Heart right ventricle (tissue), 16 donors: ENCODE measurements at regions of chr10 and their contacts with region 1.

Region 1: GRCh38 chr10:116272440-116273283 is at the start of gene GFRA1:
- DNase-seq: peak in 1 of 2 donors; percentile 32
- ATAC-seq: peak in 6 of 8 donors; percentile 17 to 39 (median 30)
- H3K4me3 ChIP-seq: peak within 1 kb of the TSS; percentile 32 to 60 (median 50)
- H3K27ac ChIP-seq: peak within 1 kb of the TSS in 2 of 10 donors; percentile 4 to 55
- H3K4me1 ChIP-seq: peaks cover 0 to 41% (median 18%) of the 10 kb centered on the region in 9 donors
- H3K27me3 ChIP-seq: peaks cover 0 to 89% (median 75%) of the 10 kb centered on the region in 7 donors
- CTCF ChIP-seq: no peak
- total RNA-seq, gene GFRA1: 0.38 to 9.3 (median 2.1) TPM

Region 2: DNA sequence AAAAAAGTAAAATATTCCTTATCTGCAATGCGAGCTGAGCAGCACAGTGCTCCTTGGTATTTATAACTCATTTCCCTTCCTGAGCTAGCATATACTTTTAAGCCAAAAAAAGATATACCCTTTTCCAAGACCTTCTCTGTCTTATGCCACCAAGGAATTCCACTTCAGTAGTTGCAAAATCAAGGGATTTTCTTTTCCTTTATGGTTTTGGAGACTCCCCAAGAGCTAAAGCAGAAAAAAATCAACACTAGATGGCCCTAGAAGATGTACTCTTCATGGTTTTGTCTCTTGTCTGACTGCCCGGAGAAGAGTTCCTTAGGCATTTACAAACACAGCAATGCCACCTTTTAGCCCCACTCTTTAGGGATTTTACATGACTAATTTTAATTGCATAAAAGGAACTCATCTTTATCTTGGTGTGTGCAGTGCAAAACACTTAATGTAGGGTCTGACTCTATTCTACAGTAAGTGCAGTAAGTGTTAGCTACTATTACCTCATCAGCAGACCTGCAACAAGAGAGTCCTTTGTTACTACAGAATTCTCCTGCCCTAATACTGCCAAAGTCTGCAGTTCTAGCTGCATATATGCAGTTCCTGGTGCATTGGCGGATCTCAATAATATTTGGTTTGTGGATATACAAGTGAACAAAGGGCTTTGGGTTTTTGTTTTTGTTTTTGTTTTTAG is 443.0 kb before region 1 on chr10:
- intact Hi-C with region 1: loop called in 1 of 10 experiments (anchors 5 kb)
- DNase-seq: no peak
- ATAC-seq: peak in 4 of 8 donors; percentile 20 to 70 (median 40)
- H3K4me3 ChIP-seq: no peak overlapping the region
- H3K27ac ChIP-seq: no peak overlapping the region
- H3K4me1 ChIP-seq: peaks cover 0 to 15% (median 0%) of the 10 kb centered on the region in 9 donors
- H3K27me3 ChIP-seq: no peaks in the 10 kb centered on the region
- CTCF ChIP-seq: peak in 7 of 9 donors; percentile 21 to 47 (median 34)

Region 3: GRCh38 chr10:115948465-115948864 is 324.2 kb before region 1 on chr10:
- intact Hi-C with region 1: loop called in 2 of 10 experiments (anchors 10 kb)
- DNase-seq: no peak
- ATAC-seq: peak in 2 of 8 donors; percentile 38
- H3K4me3 ChIP-seq: no peak overlapping the region
- H3K27ac ChIP-seq: no peak overlapping the region
- H3K4me1 ChIP-seq: peaks cover 0 to 9% (median 0%) of the 10 kb centered on the region in 9 donors
- H3K27me3 ChIP-seq: no peaks in the 10 kb centered on the region
- CTCF ChIP-seq: peak in 8 of 9 donors; percentile 12 to 57 (median 39)

Region 4: DNA sequence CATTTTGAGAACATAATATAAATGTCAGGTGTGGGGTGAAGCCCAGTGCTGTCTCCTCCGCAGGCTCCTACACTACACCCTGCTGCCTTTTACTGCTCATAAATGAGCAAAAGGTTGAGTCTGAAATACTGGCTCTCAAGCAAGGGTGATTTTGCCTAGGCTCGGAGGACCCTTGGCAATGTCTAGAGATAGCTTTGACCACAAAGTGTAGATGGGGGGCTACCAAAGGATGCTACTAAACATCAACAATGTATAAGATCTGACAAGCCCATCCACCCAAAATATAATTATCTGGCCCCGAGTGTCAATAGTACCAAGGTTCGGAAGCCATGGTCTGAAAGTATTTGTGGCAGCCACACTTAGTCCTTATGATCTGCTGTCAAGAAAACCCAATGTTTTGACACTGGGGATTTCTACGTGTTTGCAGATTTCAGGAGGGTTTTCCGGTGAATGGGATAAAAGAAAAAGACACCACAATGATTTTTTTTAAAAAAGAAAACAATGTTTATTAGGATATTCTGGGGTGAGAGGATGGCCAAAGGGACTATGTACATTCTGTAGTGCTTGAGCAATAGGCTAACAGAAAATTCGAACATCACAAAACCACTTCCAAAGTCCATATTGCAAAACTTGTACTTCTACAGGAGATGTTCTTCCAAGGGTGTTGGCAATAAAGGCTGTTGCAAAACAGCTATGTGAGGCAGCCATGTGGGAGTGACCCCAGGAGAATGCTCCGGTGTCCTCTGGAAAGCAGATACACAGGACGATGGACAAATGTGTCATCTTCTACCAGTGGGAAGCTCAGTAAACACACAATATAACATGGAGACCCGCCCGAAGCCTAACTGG is 216.0 kb before region 1 on chr10:
- intact Hi-C with region 1: no loop called
- DNase-seq: no peak
- ATAC-seq: peak in 2 of 8 donors; percentile 27 to 76
- H3K4me3 ChIP-seq: no peak overlapping the region
- H3K27ac ChIP-seq: no peak overlapping the region
- H3K4me1 ChIP-seq: peaks cover 0 to 4% (median 0%) of the 10 kb centered on the region in 9 donors
- H3K27me3 ChIP-seq: no peaks in the 10 kb centered on the region
- CTCF ChIP-seq: no peak

Region 5: GRCh38 chr10:116113721-116114501 is 158.8 kb before region 1 on chr10:
- intact Hi-C with region 1: no loop called
- DNase-seq: no peak
- ATAC-seq: no peak
- H3K4me3 ChIP-seq: no peak overlapping the region
- H3K27ac ChIP-seq: no peak overlapping the region
- H3K4me1 ChIP-seq: no peaks in the 10 kb centered on the region
- H3K27me3 ChIP-seq: peaks cover 0 to 8% (median 0%) of the 10 kb centered on the region in 7 donors
- CTCF ChIP-seq: no peak